B cell (primary cell): ENCODE measurements at regions of chr22 and their contacts with region 1.

Region 1: GRCh38 chr22:36065775-36066559 is 37.3 kb upstream of the RBFOX2 start:
- DNase-seq: peak; percentile 74
- ATAC-seq: peak; percentile 43
- H3K4me3 ChIP-seq: peak overlapping the region in 4 of 5 experiments; percentile 23 to 57 (median 42)
- H3K4me3 Mint-ChIP-seq: peak overlapping the region; percentile 81
- H3K27ac ChIP-seq: no peak overlapping the region
- H3K27ac Mint-ChIP-seq: no peak overlapping the region
- H3K4me1 ChIP-seq: peaks cover 12 to 13% of the 10 kb centered on the region in 2 donors
- H3K4me1 Mint-ChIP-seq: peaks cover 10% of the 10 kb centered on the region
- H3K27me3 ChIP-seq: peaks cover 0 to 15% (median 6%) of the 10 kb centered on the region in 4 experiments
- H3K27me3 Mint-ChIP-seq: peaks cover 26% of the 10 kb centered on the region
- CTCF ChIP-seq: peak; percentile 97

Region 2: GRCh38 chr22:35930933-35931332 is 135.0 kb before region 1 on chr22:
- CTCF ChIA-PET with region 1: interaction called, 3 read pairs
- POLR2A ChIA-PET with region 1: no interaction called
- intact Hi-C with region 1: loop called (anchors 5 kb)
- DNase-seq: peak; percentile 34
- ATAC-seq: no peak
- H3K4me3 ChIP-seq: no peak overlapping the region
- H3K4me3 Mint-ChIP-seq: no peak overlapping the region
- H3K27ac ChIP-seq: no peak overlapping the region
- H3K27ac Mint-ChIP-seq: no peak overlapping the region
- H3K4me1 ChIP-seq: no peaks in the 10 kb centered on the region
- H3K4me1 Mint-ChIP-seq: no peaks in the 10 kb centered on the region
- H3K27me3 ChIP-seq: peaks cover 0 to 4% (median 2%) of the 10 kb centered on the region in 4 experiments
- H3K27me3 Mint-ChIP-seq: peaks cover 7% of the 10 kb centered on the region
- CTCF ChIP-seq: no peak

Region 3: GRCh38 chr22:36037102-36037758 is 28.7 kb before region 1 on chr22:
- CTCF ChIA-PET with region 1: no interaction called
- POLR2A ChIA-PET with region 1: no interaction called
- intact Hi-C with region 1: no loop called
- DNase-seq: no peak
- ATAC-seq: no peak
- H3K4me3 ChIP-seq: no peak overlapping the region
- H3K4me3 Mint-ChIP-seq: no peak overlapping the region
- H3K27ac ChIP-seq: no peak overlapping the region
- H3K27ac Mint-ChIP-seq: no peak overlapping the region
- H3K4me1 ChIP-seq: no peaks in the 10 kb centered on the region
- H3K4me1 Mint-ChIP-seq: no peaks in the 10 kb centered on the region
- H3K27me3 ChIP-seq: peaks cover 0 to 34% (median 17%) of the 10 kb centered on the region in 4 experiments
- H3K27me3 Mint-ChIP-seq: peaks cover 57% of the 10 kb centered on the region
- CTCF ChIP-seq: no peak

Region 4: GRCh38 chr22:36077271-36077670 is 11.3 kb after region 1 on chr22:
- CTCF ChIA-PET with region 1: interaction called, 10 read pairs
- POLR2A ChIA-PET with region 1: no interaction called
- intact Hi-C with region 1: no loop called
- DNase-seq: no peak
- ATAC-seq: no peak
- H3K4me3 ChIP-seq: no peak overlapping the region
- H3K4me3 Mint-ChIP-seq: no peak overlapping the region
- H3K27ac ChIP-seq: no peak overlapping the region
- H3K27ac Mint-ChIP-seq: no peak overlapping the region
- H3K4me1 ChIP-seq: no peaks in the 10 kb centered on the region
- H3K4me1 Mint-ChIP-seq: no peaks in the 10 kb centered on the region
- H3K27me3 ChIP-seq: peaks cover 0 to 3% (median 0%) of the 10 kb centered on the region in 4 experiments
- H3K27me3 Mint-ChIP-seq: peaks cover 6% of the 10 kb centered on the region
- CTCF ChIP-seq: no peak

Region 5: GRCh38 chr22:36134182-36134581 is 68.2 kb after region 1 on chr22:
- CTCF ChIA-PET with region 1: no interaction called
- POLR2A ChIA-PET with region 1: no interaction called
- intact Hi-C with region 1: no loop called
- DNase-seq: no peak
- ATAC-seq: no peak
- H3K4me3 ChIP-seq: no peak overlapping the region
- H3K4me3 Mint-ChIP-seq: no peak overlapping the region
- H3K27ac ChIP-seq: no peak overlapping the region
- H3K27ac Mint-ChIP-seq: no peak overlapping the region
- H3K4me1 ChIP-seq: no peaks in the 10 kb centered on the region
- H3K4me1 Mint-ChIP-seq: no peaks in the 10 kb centered on the region
- H3K27me3 ChIP-seq: no peaks in the 10 kb centered on the region
- H3K27me3 Mint-ChIP-seq: peaks cover 23% of the 10 kb centered on the region
- CTCF ChIP-seq: no peak

Region 6: DNA sequence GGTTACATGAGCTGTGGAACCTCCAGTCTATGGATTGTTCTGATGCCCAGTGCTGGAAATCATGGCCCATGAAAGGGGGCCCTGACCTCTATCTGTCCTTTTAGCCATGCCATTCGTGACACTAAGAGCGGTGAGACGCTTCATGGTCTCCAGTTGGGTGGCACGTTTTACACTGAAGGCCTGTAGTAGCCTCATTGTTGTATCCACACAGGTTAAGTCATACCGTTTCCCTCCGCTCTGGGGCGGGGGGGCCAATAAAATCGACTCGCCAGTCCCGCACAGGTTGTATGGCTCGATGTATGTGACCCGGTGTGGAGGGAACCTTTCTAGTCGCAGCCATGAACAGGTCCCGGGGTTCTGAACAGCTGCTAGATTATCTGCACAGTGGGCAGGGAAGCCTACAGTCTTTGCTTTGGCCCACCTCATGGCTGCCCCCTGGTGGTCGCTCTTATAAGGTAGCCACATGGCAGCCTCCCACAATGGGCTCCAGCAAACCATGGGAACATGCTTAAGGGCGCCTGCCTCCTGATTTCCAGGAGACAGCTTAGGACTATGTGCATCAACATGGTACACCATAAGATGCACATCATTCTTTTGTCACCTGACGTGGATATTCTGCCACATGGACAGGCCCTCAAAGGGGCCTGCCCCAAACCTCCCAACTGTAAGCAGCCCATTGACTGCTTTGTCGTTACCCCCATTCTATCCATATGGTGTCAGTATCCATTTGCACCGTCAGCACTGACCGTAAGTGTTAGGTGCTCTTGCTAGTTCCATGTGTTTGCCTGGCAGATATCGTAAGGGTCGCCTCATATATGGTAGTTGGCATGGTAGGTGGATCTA is 114.3 kb after region 1 on chr22:
- CTCF ChIA-PET with region 1: interaction called, 16 read pairs
- POLR2A ChIA-PET with region 1: no interaction called
- intact Hi-C with region 1: loop called (anchors 1 kb)
- DNase-seq: peak; percentile 86
- ATAC-seq: peak; percentile 98
- H3K4me3 ChIP-seq: no peak overlapping the region
- H3K4me3 Mint-ChIP-seq: no peak overlapping the region
- H3K27ac ChIP-seq: no peak overlapping the region
- H3K27ac Mint-ChIP-seq: no peak overlapping the region
- H3K4me1 ChIP-seq: peaks cover 0 to 5% of the 10 kb centered on the region in 2 donors
- H3K4me1 Mint-ChIP-seq: peaks cover 5% of the 10 kb centered on the region
- H3K27me3 ChIP-seq: no peaks in the 10 kb centered on the region
- H3K27me3 Mint-ChIP-seq: peaks cover 3% of the 10 kb centered on the region
- CTCF ChIP-seq: peak; percentile 91

Region 7: DNA sequence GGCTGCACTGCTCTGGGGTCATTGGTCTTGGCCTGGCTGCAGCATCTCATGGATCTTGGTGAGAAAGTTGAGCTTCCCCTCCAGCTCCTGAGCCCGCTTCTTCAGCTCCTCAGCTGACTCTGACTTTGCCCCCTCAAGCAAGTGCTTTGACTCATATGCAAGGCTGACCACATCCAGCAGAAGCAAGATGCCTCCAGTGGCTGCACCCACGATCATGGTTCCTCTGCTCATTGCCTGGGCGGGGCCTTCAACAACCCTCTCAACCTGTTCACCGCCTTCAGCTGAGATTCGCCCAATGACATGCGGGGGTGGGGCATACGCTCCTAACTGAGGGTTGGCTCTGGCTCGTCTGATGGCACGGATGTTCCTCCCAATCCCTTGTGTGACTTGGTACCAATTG is 161.4 kb after region 1 on chr22:
- CTCF ChIA-PET with region 1: no interaction called
- POLR2A ChIA-PET with region 1: no interaction called
- intact Hi-C with region 1: no loop called
- DNase-seq: no peak
- ATAC-seq: no peak
- H3K4me3 ChIP-seq: no peak overlapping the region
- H3K4me3 Mint-ChIP-seq: no peak overlapping the region
- H3K27ac ChIP-seq: no peak overlapping the region
- H3K27ac Mint-ChIP-seq: no peak overlapping the region
- H3K4me1 ChIP-seq: peaks cover 0 to 2% of the 10 kb centered on the region in 2 donors
- H3K4me1 Mint-ChIP-seq: peaks cover 6% of the 10 kb centered on the region
- H3K27me3 ChIP-seq: no peaks in the 10 kb centered on the region
- H3K27me3 Mint-ChIP-seq: no peaks in the 10 kb centered on the region
- CTCF ChIP-seq: no peak